Naive thymus-derived CD4-positive, alpha-beta T cell (primary cell): ENCODE measurements at regions of chr21 and their contacts with region 1.

Region 1: GRCh38 chr21:41369105-41369919 is 7.5 kb downstream of the MX2 start:
- DNase-seq: peak in 8 of 9 donors; percentile 26 to 49 (median 36)
- ATAC-seq: peak; percentile 68
- H3K4me3 ChIP-seq: peak overlapping the region; percentile 77
- H3K4me3 Mint-ChIP-seq: peak overlapping the region; percentile 83 to 99 (median 89)
- H3K27ac ChIP-seq: peak overlapping the region; percentile 88
- H3K27ac Mint-ChIP-seq: peak overlapping the region; percentile 85 to 100 (median 97)
- H3K4me1 ChIP-seq: peaks cover 32 to 53% of the 10 kb centered on the region in 2 donors
- H3K4me1 Mint-ChIP-seq: peaks cover 46 to 96% (median 87%) of the 10 kb centered on the region in 7 donors
- H3K27me3 ChIP-seq: no peaks in the 10 kb centered on the region
- H3K27me3 Mint-ChIP-seq: no peaks in the 10 kb centered on the region

Region 2: GRCh38 chr21:41009398-41010100 is 359.8 kb before region 1 on chr21:
- CTCF ChIA-PET with region 1: no interaction called
- POLR2A ChIA-PET with region 1: no interaction called
- intact Hi-C with region 1: no loop called
- DNase-seq: no peak
- ATAC-seq: no peak
- H3K4me3 ChIP-seq: no peak overlapping the region
- H3K4me3 Mint-ChIP-seq: no peak overlapping the region
- H3K27ac ChIP-seq: no peak overlapping the region
- H3K27ac Mint-ChIP-seq: no peak overlapping the region
- H3K4me1 ChIP-seq: no peaks in the 10 kb centered on the region
- H3K4me1 Mint-ChIP-seq: no peaks in the 10 kb centered on the region
- H3K27me3 ChIP-seq: no peaks in the 10 kb centered on the region
- H3K27me3 Mint-ChIP-seq: peaks cover 0 to 31% (median 18%) of the 10 kb centered on the region in 5 donors

Region 3: DNA sequence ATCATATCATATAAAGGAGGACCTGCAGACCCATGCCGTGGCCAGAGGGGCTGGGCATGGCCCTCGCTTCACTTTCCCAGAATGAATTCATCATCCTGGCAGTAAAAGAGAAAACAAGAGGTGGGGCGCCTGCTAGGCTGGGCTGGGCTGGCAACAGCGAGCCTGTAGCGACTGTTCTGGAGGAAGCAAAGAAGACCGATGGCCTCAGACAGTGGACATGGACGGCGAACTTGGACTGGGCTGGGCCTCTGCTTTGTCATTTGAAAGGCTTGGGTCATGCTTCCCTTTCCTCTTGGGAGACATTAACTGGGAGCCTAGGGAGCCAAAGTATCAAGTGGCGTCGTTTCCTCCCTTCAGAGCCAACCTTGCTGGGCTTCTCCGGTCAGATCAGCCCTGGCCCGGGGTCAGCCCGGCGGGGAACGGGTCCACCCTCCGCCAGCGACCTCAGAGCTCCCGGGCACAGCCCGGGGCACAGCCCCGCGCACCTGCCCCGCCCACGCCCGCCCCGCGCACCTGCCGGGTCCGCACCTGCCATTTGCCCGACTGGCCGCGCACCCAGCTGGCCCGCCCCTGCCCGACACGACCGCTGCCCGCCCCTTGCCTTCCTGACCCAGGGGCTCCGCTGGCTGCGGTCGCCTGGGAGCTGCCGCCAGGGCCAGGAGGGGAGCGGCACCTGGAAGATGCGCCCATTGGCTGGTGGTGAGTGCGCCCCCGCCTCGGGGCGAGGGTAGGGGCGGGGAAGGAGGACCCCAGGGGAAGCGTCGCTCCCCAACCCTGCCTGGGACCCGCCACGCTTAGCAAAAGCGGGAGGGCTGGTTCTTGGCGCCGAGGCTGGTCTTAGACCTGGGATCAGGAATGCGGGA is 52.9 kb before region 1 on chr21 and contains the start of gene FAM3B:
- CTCF ChIA-PET with region 1: interaction called, 3 read pairs
- POLR2A ChIA-PET with region 1: interaction called, 10 read pairs
- intact Hi-C with region 1: no loop called
- DNase-seq: no peak
- ATAC-seq: no peak
- H3K4me3 ChIP-seq: no peak within 1 kb of the TSS
- H3K4me3 Mint-ChIP-seq: peak within 1 kb of the TSS in 9 of 10 donors; percentile 41 to 79 (median 62)
- H3K27ac ChIP-seq: no peak within 1 kb of the TSS
- H3K27ac Mint-ChIP-seq: peak within 1 kb of the TSS in 1 of 9 donors; percentile 30
- H3K4me1 ChIP-seq: peaks cover 0 to 4% of the 10 kb centered on the region in 2 donors
- H3K4me1 Mint-ChIP-seq: peaks cover 0 to 30% (median 10%) of the 10 kb centered on the region in 7 donors
- H3K27me3 ChIP-seq: no peaks in the 10 kb centered on the region
- H3K27me3 Mint-ChIP-seq: peaks cover 29 to 64% (median 41%) of the 10 kb centered on the region in 5 donors
- total RNA-seq, gene FAM3B: not detected

Region 4: GRCh38 chr21:41407541-41408460 is 38.5 kb after region 1 on chr21:
- CTCF ChIA-PET with region 1: no interaction called
- POLR2A ChIA-PET with region 1: no interaction called
- intact Hi-C with region 1: no loop called
- DNase-seq: no peak
- ATAC-seq: no peak
- H3K4me3 ChIP-seq: no peak overlapping the region
- H3K4me3 Mint-ChIP-seq: no peak overlapping the region
- H3K27ac ChIP-seq: no peak overlapping the region
- H3K27ac Mint-ChIP-seq: peak overlapping the region in 2 of 9 donors; percentile 28 to 72
- H3K4me1 ChIP-seq: no peaks in the 10 kb centered on the region
- H3K4me1 Mint-ChIP-seq: peaks cover 0 to 15% (median 4%) of the 10 kb centered on the region in 7 donors
- H3K27me3 ChIP-seq: no peaks in the 10 kb centered on the region
- H3K27me3 Mint-ChIP-seq: peaks cover 0 to 4% (median 0%) of the 10 kb centered on the region in 5 donors

Region 5: DNA sequence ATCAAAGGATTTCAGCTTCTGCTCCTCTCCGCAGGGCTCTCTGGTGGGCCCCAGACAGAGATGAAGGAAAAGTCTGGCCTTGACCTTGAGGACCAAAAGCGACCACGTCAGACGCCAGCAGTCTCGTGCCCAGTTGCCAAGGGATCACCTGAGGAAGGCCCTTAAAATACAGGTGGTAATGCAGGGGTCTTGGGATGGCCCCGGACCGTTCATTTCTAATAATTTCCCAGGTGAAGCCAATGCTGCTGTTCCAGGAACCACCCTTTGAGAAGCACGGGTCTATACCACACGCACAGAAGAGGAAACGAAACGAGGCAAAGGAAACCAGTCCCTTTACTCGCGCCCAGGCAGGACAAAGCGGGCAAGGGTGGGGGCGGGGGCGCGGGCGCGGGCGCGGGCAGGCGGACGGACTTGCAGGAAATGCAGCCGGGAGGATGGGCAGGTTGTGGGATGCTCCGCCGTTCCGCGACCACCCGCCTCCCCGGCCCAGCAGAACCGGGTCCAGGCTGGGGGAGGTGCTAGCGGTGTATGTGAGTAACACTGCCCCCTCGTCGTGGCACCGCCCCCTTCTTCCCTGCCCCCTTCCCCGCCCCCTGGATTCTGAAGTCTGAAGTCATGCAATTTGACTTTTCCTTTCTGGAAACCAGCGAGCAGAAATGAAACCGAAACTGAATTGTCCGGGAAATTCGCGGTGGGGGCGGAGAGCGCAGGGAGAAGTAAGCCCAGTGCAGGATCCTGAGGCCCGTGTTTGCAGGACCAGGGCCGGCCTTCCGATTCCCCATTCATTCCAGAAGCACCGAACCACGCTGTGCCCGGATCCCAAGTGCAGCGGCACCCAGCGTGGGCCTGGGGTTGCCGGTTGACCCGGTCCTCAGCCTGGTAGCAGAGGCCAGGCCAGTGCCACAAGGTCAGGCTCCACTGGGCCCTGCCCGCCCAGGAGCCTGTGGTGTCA is 50.9 kb after region 1 on chr21:
- CTCF ChIA-PET with region 1: interaction called, 9 read pairs
- POLR2A ChIA-PET with region 1: interaction called, 82 read pairs
- intact Hi-C with region 1: no loop called
- DNase-seq: peak in 7 of 9 donors; percentile 18 to 53 (median 33)
- ATAC-seq: peak; percentile 88
- H3K4me3 ChIP-seq: peak overlapping the region; percentile 77
- H3K4me3 Mint-ChIP-seq: peak overlapping the region; percentile 89 to 92 (median 90)
- H3K27ac ChIP-seq: peak overlapping the region; percentile 67
- H3K27ac Mint-ChIP-seq: peak overlapping the region; percentile 76 to 100 (median 94)
- H3K4me1 ChIP-seq: peaks cover 0 to 10% of the 10 kb centered on the region in 2 donors
- H3K4me1 Mint-ChIP-seq: peaks cover 12 to 57% (median 49%) of the 10 kb centered on the region in 7 donors
- H3K27me3 ChIP-seq: no peaks in the 10 kb centered on the region
- H3K27me3 Mint-ChIP-seq: peaks cover 0 to 10% (median 0%) of the 10 kb centered on the region in 5 donors

Region 6: DNA sequence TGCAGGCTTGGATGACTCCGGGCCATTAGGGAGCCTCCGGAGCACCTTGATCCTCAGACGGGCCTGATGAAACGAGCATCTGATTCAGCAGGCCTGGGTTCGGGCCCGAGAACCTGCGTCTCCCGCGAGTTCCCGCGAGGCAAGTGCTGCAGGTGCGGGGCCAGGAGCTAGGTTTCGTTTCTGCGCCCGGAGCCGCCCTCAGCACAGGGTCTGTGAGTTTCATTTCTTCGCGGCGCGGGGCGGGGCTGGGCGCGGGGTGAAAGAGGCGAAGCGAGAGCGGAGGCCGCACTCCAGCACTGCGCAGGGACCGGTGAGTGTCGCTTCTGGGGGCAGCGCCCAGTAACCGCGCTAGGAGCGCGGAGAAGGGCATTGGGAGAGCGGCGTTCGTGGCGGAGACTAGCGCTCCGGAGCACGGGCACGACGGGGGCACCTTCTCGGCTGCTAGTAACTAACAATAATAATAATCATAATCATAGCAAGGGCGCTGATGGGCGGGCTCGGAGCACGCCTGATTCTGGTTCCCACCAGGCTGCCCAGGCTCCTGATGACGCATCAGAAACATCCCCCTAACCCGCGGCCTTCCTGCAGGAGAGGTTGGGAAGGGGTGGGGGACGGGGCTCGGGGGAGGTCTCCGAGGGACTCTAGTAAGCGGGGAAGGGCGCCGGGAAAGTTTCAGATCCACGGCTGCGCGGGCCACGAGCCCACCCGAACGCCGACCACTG is 56.8 kb after region 1 on chr21 and contains the start of gene MX1:
- CTCF ChIA-PET with region 1: interaction called, 9 read pairs
- POLR2A ChIA-PET with region 1: interaction called, 82 read pairs
- intact Hi-C with region 1: loop called in 1 of 2 experiments (anchors 1 kb)
- DNase-seq: peak; percentile 76 to 90 (median 87)
- ATAC-seq: peak; percentile 100
- H3K4me3 ChIP-seq: peak within 1 kb of the TSS; percentile 99
- H3K4me3 Mint-ChIP-seq: peak within 1 kb of the TSS; percentile 94 to 98 (median 97)
- H3K27ac ChIP-seq: peak within 1 kb of the TSS; percentile 92
- H3K27ac Mint-ChIP-seq: peak within 1 kb of the TSS; percentile 95 to 100 (median 98)
- H3K4me1 ChIP-seq: peaks cover 10 to 12% of the 10 kb centered on the region in 2 donors
- H3K4me1 Mint-ChIP-seq: peaks cover 16 to 83% (median 62%) of the 10 kb centered on the region in 7 donors
- H3K27me3 ChIP-seq: no peaks in the 10 kb centered on the region
- H3K27me3 Mint-ChIP-seq: no peaks in the 10 kb centered on the region
- total RNA-seq, gene MX1: 67.6 to 384 (median 74.5) TPM

Region 7: DNA sequence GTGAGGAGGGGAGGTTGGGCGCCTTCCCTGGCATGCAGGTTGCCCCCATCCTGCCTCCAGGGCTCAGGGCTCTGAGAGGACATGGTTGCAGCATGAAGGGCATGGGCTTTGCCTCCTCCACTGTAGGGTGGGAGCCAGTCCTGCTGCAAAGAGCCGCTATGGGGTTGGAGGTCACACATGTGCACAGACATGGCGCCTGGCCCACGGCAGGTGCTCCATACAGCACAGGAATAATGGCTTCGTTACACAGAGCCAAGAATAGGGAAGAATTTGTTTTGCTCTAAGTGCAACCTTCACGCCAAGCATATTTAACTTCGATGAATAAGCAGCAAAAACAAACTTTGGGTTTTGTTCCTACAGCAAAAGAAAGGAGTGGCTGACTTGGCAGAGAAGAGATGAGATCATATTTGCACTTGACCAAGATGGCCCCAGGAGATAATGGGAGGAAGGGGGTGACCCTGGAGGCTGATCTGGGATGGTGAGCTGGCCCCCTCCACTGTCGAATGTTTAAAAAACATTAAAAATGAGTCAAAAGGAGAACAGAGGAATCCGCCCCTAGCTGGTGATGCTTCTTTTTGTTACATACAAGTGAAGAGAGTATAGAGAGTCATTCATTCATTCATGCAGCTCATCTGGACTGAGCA is 596.9 kb after region 1 on chr21:
- CTCF ChIA-PET with region 1: no interaction called
- POLR2A ChIA-PET with region 1: no interaction called
- intact Hi-C with region 1: no loop called
- DNase-seq: no peak
- ATAC-seq: no peak
- H3K4me3 ChIP-seq: no peak overlapping the region
- H3K4me3 Mint-ChIP-seq: no peak overlapping the region
- H3K27ac ChIP-seq: no peak overlapping the region
- H3K27ac Mint-ChIP-seq: no peak overlapping the region
- H3K4me1 ChIP-seq: no peaks in the 10 kb centered on the region
- H3K4me1 Mint-ChIP-seq: peaks cover 0 to 10% (median 5%) of the 10 kb centered on the region in 7 donors
- H3K27me3 ChIP-seq: no peaks in the 10 kb centered on the region
- H3K27me3 Mint-ChIP-seq: peaks cover 0 to 13% (median 5%) of the 10 kb centered on the region in 5 donors